ENCODE measurements at regions of chr14 and their contacts with region 1.

Region 1: DNA sequence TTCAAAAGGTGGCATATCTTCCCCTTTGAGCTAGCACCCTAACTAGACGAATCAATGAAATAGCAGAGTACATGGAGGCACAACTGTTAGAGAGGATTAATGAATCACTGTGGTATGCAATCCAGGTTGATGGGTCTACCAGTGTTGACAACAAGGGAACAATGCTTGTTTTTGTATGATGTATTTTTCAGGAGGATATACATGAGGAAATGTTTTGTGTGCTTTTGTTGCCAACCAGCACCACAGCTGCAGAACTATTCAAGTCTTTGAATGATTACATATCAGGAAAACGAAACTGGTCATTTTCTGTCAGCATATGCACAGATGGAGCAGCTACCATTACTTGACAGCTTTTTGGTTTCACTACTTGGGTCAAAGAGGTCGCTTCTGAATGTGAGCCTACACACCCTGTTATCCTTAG is 142.6 kb downstream of the GPHN start:
- DNase-seq: no peak
- ATAC-seq: no peak

Region 2: DNA sequence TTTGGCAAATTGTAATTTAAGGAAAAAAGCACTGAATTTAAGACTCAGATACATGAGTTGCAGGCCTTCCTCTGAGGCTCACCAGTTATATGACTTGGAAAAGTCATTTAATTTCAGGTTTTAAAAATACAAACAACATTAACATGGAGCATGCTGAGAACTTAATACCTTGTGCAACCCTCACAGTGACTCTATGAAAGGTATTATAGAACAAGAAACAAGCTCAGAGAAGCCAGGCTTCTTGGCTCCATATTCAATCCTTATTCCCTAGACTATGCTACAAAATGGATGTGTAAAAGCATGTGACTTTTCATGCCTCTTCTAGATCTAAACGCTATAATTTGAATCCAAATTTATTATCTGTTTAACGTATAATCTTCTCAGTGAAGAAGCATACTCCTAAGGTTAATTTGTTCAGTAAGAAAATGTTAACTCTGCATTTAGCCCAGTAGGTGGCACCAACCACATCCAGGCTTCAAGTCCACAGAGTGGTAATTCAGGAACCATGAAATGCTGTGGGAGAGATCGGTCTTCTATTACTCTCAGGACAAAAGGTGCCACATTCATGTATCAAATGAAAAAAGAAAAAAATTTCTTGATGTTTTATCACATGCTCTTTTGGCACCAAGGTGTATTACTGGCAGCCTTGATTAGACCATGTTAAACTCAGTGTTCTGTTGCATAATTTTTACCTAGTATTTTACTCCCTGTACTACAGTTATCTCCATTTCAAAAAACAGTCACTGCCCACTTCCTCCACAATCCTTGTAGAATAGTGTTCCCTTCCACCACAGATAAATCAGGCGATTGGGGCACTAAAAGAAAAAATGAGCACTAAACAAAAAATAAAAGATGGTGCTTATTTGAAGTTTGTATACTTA is 155.0 kb before region 1 on chr14:
- intact Hi-C with region 1: no loop called
- DNase-seq: no peak
- ATAC-seq: peak; percentile 84

Region 3: DNA sequence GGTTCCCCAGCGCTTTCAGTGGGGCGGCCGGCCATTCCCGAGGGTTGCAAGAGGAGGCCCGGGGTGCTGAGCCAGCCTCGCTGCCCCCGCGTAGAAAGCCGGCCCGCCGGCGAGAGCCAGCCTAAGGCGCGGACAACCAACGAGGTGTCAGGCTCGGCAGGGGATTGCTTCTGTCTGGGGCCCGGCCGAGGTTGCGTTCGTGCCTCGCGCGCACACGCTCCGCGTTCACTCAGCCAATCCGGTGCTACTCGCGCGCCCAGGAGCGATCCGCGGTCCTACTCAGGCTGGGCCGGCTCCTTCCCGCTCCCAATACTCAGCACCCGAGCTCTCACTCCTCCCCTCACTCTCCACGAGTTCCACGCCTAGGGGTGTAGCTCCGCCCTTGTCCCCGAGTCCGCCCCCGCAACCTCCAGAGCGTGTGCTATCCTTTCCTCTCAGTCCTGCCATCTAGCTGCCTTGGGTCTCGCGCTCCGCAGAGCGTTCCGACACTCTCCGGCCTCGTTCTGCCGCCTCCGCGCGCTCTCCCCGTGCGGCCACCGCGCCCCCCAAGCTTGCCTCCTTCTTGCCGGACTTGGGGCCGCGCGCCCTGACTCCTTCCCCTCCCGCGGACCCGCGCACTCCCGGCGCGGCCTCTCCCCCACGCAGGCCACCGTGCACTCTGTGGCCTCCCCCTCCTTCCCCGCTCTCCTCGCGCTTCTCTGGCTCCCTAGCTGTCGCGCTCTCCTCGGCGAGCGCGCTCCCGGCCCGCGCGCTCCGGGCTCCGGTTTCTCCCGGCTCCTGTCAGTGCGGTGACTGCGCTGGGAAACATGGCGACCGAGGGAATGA is 142.6 kb before region 1 on chr14 and contains the start of gene GPHN:
- intact Hi-C with region 1: loop called (anchors 5 kb)
- DNase-seq: peak; percentile 96
- ATAC-seq: peak; percentile 99
- total RNA-seq, gene GPHN: 23.5 TPM

Region 4: GRCh38 chr14:66696326-66696725 is 45.8 kb after region 1 on chr14:
- intact Hi-C with region 1: no loop called
- DNase-seq: no peak
- ATAC-seq: no peak

Measured in Right ventricle myocardium inferior (tissue), 1 donor.